HEK293 (cell line): ENCODE measurements at regions of chr16 and their contacts with region 1.

Region 1: GRCh38 chr16:22190776-22191531 is 15.1 kb upstream of the EEF2K start:
- H3K4me3 ChIP-seq: peak overlapping the region; percentile 63
- H3K27ac ChIP-seq: peak overlapping the region; percentile 27; the same call in 1 of the 2 replicates
- H3K4me1 ChIP-seq: peaks cover 6% of the 10 kb centered on the region
- CTCF ChIP-seq: no peak

Region 2: GRCh38 chr16:22007509-22008214 is 183.3 kb before region 1 on chr16 and contains the start of gene MOSMO:
- CTCF ChIA-PET with region 1: interaction called, 66 read pairs
- POLR2A ChIA-PET with region 1: interaction called, 4 read pairs
- H3K4me3 ChIP-seq: peak within 1 kb of the TSS; percentile 97
- H3K27ac ChIP-seq: peak within 1 kb of the TSS; percentile 86
- H3K4me1 ChIP-seq: peaks cover 5% of the 10 kb centered on the region
- CTCF ChIP-seq: peak; percentile 53

Region 3: DNA sequence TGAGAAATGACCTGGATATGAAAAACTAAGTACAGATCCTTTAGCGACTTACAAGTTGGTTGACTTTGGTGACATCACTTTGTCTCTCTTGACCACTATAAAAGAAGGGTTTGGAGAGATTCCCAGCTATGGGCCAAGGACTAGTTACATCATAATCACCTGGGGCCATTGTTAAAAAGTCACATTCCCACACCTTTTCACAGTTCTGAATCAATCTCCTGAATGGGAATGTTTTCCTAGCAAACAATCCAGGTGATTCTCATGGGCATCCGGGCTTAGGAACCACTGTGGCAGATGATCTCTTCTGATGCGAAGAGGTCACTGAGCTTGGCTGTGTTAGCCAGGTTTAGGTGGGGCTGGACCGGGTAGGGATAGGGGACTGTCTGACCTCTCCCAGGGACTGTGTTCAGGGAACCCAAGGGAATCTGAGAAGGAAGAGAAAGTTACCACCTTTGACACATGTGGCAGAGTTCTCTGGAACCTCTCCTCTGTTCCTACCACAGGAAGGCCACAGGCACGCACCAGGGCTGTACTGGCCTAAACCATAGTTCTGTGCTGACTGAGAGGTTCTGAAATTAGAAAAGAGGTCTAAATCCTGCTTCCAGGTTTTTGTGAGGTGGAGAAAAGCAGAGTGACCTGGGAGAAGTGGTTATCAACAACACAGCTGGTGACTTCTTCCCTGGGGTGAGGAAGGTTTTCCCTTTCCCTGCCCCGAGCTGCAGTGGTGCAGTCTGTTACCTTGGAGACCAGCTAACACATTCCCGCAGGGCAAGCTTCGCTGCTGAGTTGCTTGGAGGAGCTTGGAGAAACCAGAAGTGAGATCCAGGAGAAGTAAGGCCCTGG is 99.0 kb before region 1 on chr16 and contains the start of gene VWA3A:
- CTCF ChIA-PET with region 1: interaction called, 11 read pairs
- POLR2A ChIA-PET with region 1: no interaction called
- H3K4me3 ChIP-seq: no peak within 1 kb of the TSS
- H3K27ac ChIP-seq: no peak within 1 kb of the TSS
- H3K4me1 ChIP-seq: peaks cover 2% of the 10 kb centered on the region; the same call in 1 of the 2 replicates
- CTCF ChIP-seq: no peak

Region 4: DNA sequence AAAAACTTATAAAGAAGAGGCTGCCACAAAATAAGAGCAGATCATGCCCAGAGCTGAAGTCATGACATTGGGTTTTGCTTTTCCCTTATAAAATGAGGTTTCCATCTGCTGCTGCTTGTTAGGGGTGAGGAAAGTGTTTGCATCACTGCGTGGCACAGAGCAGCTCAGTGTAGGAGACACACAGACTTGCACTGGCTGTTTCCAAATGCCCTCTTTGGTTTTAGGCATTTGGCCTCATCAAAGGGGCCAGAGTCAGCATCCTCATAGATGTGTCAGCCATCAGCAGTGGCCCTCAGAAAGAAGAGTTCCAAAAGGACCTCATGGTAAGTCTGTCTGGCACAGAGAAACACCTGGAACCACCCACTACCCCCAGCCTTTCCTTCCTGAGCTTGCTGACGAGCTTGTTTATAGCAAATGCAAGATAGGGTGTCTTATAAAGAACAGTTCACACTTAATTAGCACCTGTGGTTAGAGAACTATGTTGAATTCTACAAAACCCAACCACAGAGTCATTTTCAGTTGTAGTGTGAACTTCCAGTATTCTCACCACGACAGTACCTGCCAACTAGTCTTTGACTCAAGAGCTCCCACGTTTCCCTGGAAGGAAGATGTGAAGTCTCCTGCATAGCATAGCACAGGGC is 81.6 kb before region 1 on chr16:
- CTCF ChIA-PET with region 1: interaction called, 14 read pairs
- POLR2A ChIA-PET with region 1: no interaction called
- H3K4me3 ChIP-seq: no peak overlapping the region
- H3K27ac ChIP-seq: no peak overlapping the region
- H3K4me1 ChIP-seq: no peaks in the 10 kb centered on the region
- CTCF ChIP-seq: no peak

Region 5: GRCh38 chr16:22206013-22206841 is 15.3 kb after region 1 on chr16 and contains the start of gene EEF2K:
- CTCF ChIA-PET with region 1: interaction called, 6 read pairs
- POLR2A ChIA-PET with region 1: interaction called, 11 read pairs
- H3K4me3 ChIP-seq: peak within 1 kb of the TSS; percentile 91
- H3K27ac ChIP-seq: peak within 1 kb of the TSS; percentile 68; the same call in 1 of the 2 replicates
- H3K4me1 ChIP-seq: no peaks in the 10 kb centered on the region
- CTCF ChIP-seq: peak; percentile 97

Region 6: GRCh38 chr16:22232277-22233042 is 41.5 kb after region 1 on chr16:
- CTCF ChIA-PET with region 1: interaction called, 10 read pairs
- POLR2A ChIA-PET with region 1: no interaction called
- H3K4me3 ChIP-seq: no peak overlapping the region
- H3K27ac ChIP-seq: peak overlapping the region; percentile 90
- H3K4me1 ChIP-seq: peaks cover 12% of the 10 kb centered on the region; the same call in 1 of the 2 replicates
- CTCF ChIP-seq: no peak

Region 7: GRCh38 chr16:22300427-22301071 is 109.6 kb after region 1 on chr16:
- CTCF ChIA-PET with region 1: interaction called, 16 read pairs
- POLR2A ChIA-PET with region 1: interaction called, 9 read pairs
- H3K4me3 ChIP-seq: no peak overlapping the region
- H3K27ac ChIP-seq: no peak overlapping the region
- H3K4me1 ChIP-seq: no peaks in the 10 kb centered on the region
- CTCF ChIP-seq: peak; percentile 59; the same call in 1 of the 2 replicates